ENCODE measurements at regions of chr4 and their contacts with region 1.

Region 1: DNA sequence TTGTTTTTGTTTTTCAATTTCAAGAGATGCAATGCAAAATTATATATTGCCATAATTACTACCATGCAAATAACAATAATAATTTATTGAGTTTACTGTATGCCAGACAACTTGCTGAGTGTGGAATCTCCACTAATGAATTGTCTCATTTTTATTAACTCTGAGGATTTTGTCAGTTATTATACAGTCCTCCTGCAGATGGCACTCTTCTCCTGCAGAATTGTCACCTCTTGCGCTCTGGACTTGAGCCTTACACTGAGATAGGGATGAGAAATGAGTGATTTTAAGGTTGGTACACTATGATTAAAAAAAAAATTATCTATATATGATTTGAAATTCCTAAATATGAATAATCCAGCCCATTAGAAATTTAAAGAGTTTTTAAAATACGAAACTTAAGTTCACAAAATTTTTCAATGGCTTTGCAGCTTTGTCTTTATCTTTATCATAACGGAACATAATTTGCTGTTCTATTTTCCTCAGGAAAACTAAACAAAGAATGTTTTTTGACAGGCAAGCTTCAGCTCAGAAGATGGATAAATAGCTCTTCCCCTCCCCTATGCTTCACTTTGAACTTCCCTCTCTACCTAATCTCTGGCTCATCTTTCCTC is 12.7 kb upstream of the PAQR3 start:
- DNase-seq: peak; percentile 23
- H3K4me3 ChIP-seq: no peak overlapping the region
- H3K27ac ChIP-seq: no peak overlapping the region
- H3K4me1 ChIP-seq: no peaks in the 10 kb centered on the region
- H3K27me3 ChIP-seq: no peaks in the 10 kb centered on the region
- CTCF ChIP-seq: peak; percentile 61 to 71

Region 2: GRCh38 chr4:78775303-78776030 is 176.5 kb before region 1 on chr4:
- CTCF ChIA-PET with region 1: no interaction called
- dilution Hi-C with region 1: no loop called
- in situ Hi-C with region 1: no loop called
- intact Hi-C with region 1: no loop called
- DNase-seq: peak; percentile 72
- H3K4me3 ChIP-seq: peak overlapping the region; percentile 77 to 91 (median 89)
- H3K27ac ChIP-seq: peak overlapping the region; percentile 90
- H3K4me1 ChIP-seq: peaks cover 8% of the 10 kb centered on the region
- H3K27me3 ChIP-seq: no peaks in the 10 kb centered on the region
- CTCF ChIP-seq: no peak

Region 3: GRCh38 chr4:79042079-79042674 is 90.2 kb after region 1 on chr4:
- CTCF ChIA-PET with region 1: no interaction called
- dilution Hi-C with region 1: no loop called
- in situ Hi-C with region 1: no loop called
- intact Hi-C with region 1: loop called (anchors 5 kb)
- DNase-seq: peak; percentile 2
- H3K4me3 ChIP-seq: no peak overlapping the region
- H3K27ac ChIP-seq: no peak overlapping the region
- H3K4me1 ChIP-seq: no peaks in the 10 kb centered on the region
- H3K27me3 ChIP-seq: no peaks in the 10 kb centered on the region
- CTCF ChIP-seq: peak; percentile 44 to 63

Region 4: DNA sequence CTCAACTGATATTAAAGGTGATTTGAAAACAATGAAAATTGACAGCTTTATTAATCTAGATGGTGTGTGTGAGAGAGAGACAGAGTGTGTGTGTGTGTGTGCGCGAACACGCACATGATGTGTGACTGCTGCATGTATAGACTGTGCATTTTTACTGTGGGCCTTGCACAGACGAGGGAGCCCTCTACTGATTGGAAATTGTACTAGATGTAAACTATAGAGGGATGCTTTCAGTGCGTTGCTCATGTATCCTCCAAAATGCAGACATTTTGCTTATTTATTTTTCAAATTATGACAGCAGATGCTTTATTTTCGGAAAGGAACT is 624.4 kb after region 1 on chr4:
- CTCF ChIA-PET with region 1: no interaction called
- dilution Hi-C with region 1: no loop called
- in situ Hi-C with region 1: no loop called
- intact Hi-C with region 1: loop called (anchors 1 kb)
- DNase-seq: peak; percentile 9
- H3K4me3 ChIP-seq: no peak overlapping the region
- H3K27ac ChIP-seq: no peak overlapping the region
- H3K4me1 ChIP-seq: no peaks in the 10 kb centered on the region
- H3K27me3 ChIP-seq: no peaks in the 10 kb centered on the region
- CTCF ChIP-seq: peak; percentile 20 to 52

Region 5: GRCh38 chr4:79917246-79917645 is 965.3 kb after region 1 on chr4:
- CTCF ChIA-PET with region 1: no interaction called
- dilution Hi-C with region 1: no loop called
- in situ Hi-C with region 1: no loop called
- intact Hi-C with region 1: loop called (anchors 10 kb)
- DNase-seq: peak; percentile 32
- H3K4me3 ChIP-seq: no peak overlapping the region
- H3K27ac ChIP-seq: no peak overlapping the region
- H3K4me1 ChIP-seq: peaks cover 7% of the 10 kb centered on the region
- H3K27me3 ChIP-seq: no peaks in the 10 kb centered on the region
- CTCF ChIP-seq: peak; percentile 57 to 86

Region 6: GRCh38 chr4:80215449-80216052 is 1263.6 kb after region 1 on chr4:
- CTCF ChIA-PET with region 1: no interaction called
- dilution Hi-C with region 1: no loop called
- in situ Hi-C with region 1: loop called (anchors 25 kb)
- intact Hi-C with region 1: loop called (anchors 2 kb)
- DNase-seq: no peak
- H3K4me3 ChIP-seq: no peak overlapping the region
- H3K27ac ChIP-seq: no peak overlapping the region
- H3K4me1 ChIP-seq: peaks cover 16% of the 10 kb centered on the region
- H3K27me3 ChIP-seq: no peaks in the 10 kb centered on the region
- CTCF ChIP-seq: peak; percentile 60 to 61

Region 7: DNA sequence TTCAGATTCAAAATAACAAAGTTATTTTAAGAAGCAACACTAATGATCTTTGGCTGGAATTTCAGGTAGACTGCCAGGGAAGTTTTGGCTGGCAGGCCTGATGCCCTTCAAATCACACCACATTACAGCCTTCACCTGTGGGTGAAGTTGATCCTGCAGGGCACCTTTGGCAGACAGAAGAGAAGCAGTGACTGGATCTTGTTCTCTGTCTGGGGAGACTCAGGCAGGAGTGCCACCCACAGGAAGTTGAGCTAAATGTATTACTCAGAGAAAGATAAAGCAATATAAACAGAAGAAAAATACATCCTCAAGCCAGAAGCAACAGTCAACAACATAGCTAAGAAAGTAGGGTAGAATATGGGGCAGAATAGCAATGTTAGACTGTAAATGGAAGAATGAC is 1370.7 kb after region 1 on chr4:
- CTCF ChIA-PET with region 1: no interaction called
- dilution Hi-C with region 1: no loop called
- in situ Hi-C with region 1: loop called in 1 of 2 experiments (anchors 25 kb)
- intact Hi-C with region 1: loop called (anchors 1 kb)
- DNase-seq: peak; percentile 62
- H3K4me3 ChIP-seq: no peak overlapping the region
- H3K27ac ChIP-seq: no peak overlapping the region
- H3K4me1 ChIP-seq: no peaks in the 10 kb centered on the region
- H3K27me3 ChIP-seq: no peaks in the 10 kb centered on the region
- CTCF ChIP-seq: peak; percentile 54 to 63

Region 8: GRCh38 chr4:80335554-80336358 is 1383.8 kb after region 1 on chr4 and contains the start of gene CFAP299:
- CTCF ChIA-PET with region 1: no interaction called
- dilution Hi-C with region 1: no loop called
- in situ Hi-C with region 1: loop called in 1 of 2 experiments (anchors 25 kb)
- intact Hi-C with region 1: no loop called
- DNase-seq: peak; percentile 90
- H3K4me3 ChIP-seq: peak within 1 kb of the TSS; percentile 61 to 78 (median 72)
- H3K27ac ChIP-seq: peak within 1 kb of the TSS; percentile 29
- H3K4me1 ChIP-seq: peaks cover 11% of the 10 kb centered on the region
- H3K27me3 ChIP-seq: no peaks in the 10 kb centered on the region
- CTCF ChIP-seq: peak; percentile 3 to 50
- total RNA-seq, gene CFAP299: not detected